A673 (cell line): ENCODE measurements at regions of chr19 and their contacts with region 1.

Region 1: GRCh38 chr19:55216461-55217198 is 7.3 kb upstream of the PTPRH start:
- DNase-seq: peak; percentile 98
- H3K4me3 ChIP-seq: peak overlapping the region; percentile 66
- H3K27ac ChIP-seq: peak overlapping the region; percentile 98
- H3K4me1 ChIP-seq: peaks cover 3% of the 10 kb centered on the region
- H3K27me3 ChIP-seq: no peaks in the 10 kb centered on the region
- CTCF ChIP-seq: no peak

Region 2: DNA sequence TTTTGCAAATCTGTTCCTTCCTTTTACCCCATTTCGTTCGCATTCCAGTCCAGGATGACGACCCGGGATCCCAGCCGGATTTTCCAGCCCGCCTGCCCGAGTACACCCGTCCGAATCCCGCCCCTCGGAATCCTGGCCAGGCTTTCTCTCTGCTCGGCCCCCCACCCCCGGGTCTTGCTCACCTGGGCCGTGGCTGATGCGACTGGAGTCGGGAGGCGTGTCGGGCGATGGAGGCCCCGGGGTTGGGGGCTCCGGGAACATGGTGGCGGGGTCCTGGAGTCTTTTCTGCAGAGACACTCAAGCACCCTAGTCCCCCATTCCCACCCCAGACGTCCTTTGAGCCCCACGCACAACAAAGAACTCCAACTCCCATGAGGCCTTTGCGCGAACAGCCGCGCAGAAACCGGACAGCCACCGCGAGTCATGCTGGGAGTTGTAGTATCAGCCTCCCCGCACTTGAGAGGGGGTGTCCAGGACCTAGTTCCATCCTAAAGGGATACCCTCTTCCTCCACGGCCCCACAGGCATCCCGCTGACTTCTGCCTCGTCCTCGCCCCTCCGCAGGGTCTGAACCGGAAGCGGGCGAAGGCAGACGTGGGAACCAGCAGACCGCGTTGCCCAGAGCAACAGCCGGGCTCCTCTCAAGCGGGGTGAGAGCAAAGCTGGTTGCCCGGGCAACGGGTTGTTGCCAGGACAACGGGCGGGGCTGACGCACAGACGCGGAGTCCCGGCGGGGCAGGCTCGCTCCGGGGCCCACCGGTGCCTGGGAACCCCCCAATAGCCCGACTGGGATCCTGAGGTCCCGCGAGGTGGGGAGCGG is 37.6 kb before region 1 on chr19:
- CTCF ChIA-PET with region 1: no interaction called
- POLR2A ChIA-PET with region 1: no interaction called
- intact Hi-C with region 1: loop called (anchors 5 kb)
- DNase-seq: peak; percentile 92
- H3K4me3 ChIP-seq: peak overlapping the region; percentile 29
- H3K27ac ChIP-seq: no peak overlapping the region
- H3K4me1 ChIP-seq: peaks cover 9% of the 10 kb centered on the region
- H3K27me3 ChIP-seq: peaks cover 35% of the 10 kb centered on the region
- CTCF ChIP-seq: no peak

Region 3: GRCh38 chr19:55258828-55259539 is 42.4 kb after region 1 on chr19 and contains the start of gene PPP6R1:
- CTCF ChIA-PET with region 1: no interaction called
- POLR2A ChIA-PET with region 1: no interaction called
- intact Hi-C with region 1: loop called (anchors 1 kb)
- DNase-seq: peak; percentile 99
- H3K4me3 ChIP-seq: peak within 1 kb of the TSS; percentile 98
- H3K27ac ChIP-seq: peak within 1 kb of the TSS; percentile 96
- H3K4me1 ChIP-seq: peaks cover 23% of the 10 kb centered on the region
- H3K27me3 ChIP-seq: no peaks in the 10 kb centered on the region
- CTCF ChIP-seq: no peak
- total RNA-seq, gene PPP6R1: 103 and 108 TPM in 2 replicates